ENCODE measurements at regions of chr3 and their contacts with region 1.

Region 1: GRCh38 chr3:143847787-143848631 is at the start of gene SLC9A9:
- H3K4me3 Mint-ChIP-seq: peak within 1 kb of the TSS; percentile 85
- H3K27ac Mint-ChIP-seq: peak within 1 kb of the TSS; percentile 85
- H3K4me1 Mint-ChIP-seq: peaks cover 58% of the 10 kb centered on the region
- H3K27me3 Mint-ChIP-seq: no peaks in the 10 kb centered on the region

Region 2: GRCh38 chr3:143775459-143775858 is 72.5 kb before region 1 on chr3:
- intact Hi-C with region 1: loop called (anchors 5 kb)
- H3K4me3 Mint-ChIP-seq: no peak overlapping the region
- H3K27ac Mint-ChIP-seq: no peak overlapping the region
- H3K4me1 Mint-ChIP-seq: no peaks in the 10 kb centered on the region
- H3K27me3 Mint-ChIP-seq: no peaks in the 10 kb centered on the region

Region 3: GRCh38 chr3:143809121-143809621 is 38.8 kb before region 1 on chr3:
- intact Hi-C with region 1: loop called (anchors 5 kb)
- H3K4me3 Mint-ChIP-seq: no peak overlapping the region
- H3K27ac Mint-ChIP-seq: no peak overlapping the region
- H3K4me1 Mint-ChIP-seq: peaks cover 35% of the 10 kb centered on the region
- H3K27me3 Mint-ChIP-seq: no peaks in the 10 kb centered on the region

Region 4: GRCh38 chr3:143831208-143831607 is 16.8 kb before region 1 on chr3:
- intact Hi-C with region 1: loop called (anchors 2 kb)
- H3K4me3 Mint-ChIP-seq: no peak overlapping the region
- H3K27ac Mint-ChIP-seq: peak overlapping the region; percentile 15
- H3K4me1 Mint-ChIP-seq: peaks cover 62% of the 10 kb centered on the region
- H3K27me3 Mint-ChIP-seq: no peaks in the 10 kb centered on the region